Activated CD4-positive, alpha-beta T cell treated with anti-CD3 and anti-CD28 coated beads, Interleukin-2, amount 10 ng/mL, durations not matched to agents 24 days and 14 days (primary cell): ENCODE measurements at regions of chr1 and their contacts with region 1.

Region 1: DNA sequence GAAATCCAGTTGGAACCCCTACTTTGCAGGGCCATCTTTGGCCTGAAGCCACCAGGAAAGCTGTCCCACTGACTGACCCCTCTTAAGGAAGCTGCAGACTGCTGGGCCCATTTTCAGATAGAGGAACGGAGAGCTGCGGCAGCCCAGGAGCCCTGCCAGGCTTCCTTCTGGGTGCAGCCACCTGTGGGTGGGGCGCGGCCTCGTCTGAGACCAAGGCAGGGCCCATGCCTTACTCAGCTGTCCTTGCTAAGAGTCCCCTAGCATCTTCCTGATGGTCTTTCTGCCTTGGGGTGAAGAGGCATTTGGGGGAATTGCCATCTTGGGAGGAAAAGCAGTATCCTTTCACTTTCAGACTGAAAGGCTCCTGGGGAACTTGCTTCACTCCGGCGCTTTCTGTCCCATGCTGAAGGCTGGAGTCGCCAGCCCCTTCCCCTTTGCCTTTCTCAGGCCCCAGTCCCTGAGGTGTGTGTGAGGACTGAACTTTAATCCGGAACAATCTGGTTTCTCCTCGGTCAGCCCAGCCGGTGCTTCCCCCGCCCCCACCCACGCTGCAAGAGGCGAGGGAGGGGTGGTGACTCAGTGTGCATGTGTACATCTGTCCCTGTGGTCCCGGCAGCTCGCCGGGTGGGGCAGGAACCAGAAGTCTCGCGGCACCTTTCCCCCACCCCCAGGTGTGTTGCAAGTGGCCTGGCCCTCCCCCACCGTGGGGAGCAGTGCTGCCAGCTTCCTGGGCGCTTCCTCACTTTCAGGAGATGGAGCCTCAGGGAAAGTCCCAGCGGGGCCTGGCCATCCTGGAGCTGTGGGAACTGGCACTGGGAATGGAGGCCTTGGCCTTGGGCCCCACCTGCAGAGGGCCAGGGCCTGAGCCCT is 5.1 kb downstream of the ZC3H12A start:
- DNase-seq: peak; percentile 94
- H3K4me3 Mint-ChIP-seq: peak overlapping the region; percentile 97
- H3K27ac Mint-ChIP-seq: peak overlapping the region; percentile 98
- H3K4me1 Mint-ChIP-seq: peaks cover 32% of the 10 kb centered on the region
- H3K27me3 Mint-ChIP-seq: no peaks in the 10 kb centered on the region

Region 2: GRCh38 chr1:36155408-36156328 is 1323.8 kb before region 1 on chr1 and contains the start of gene MAP7D1:
- intact Hi-C with region 1: loop called (anchors 5 kb)
- DNase-seq: peak; percentile 94
- H3K4me3 Mint-ChIP-seq: peak within 1 kb of the TSS; percentile 96
- H3K27ac Mint-ChIP-seq: peak within 1 kb of the TSS; percentile 96
- H3K4me1 Mint-ChIP-seq: peaks cover 65% of the 10 kb centered on the region
- H3K27me3 Mint-ChIP-seq: no peaks in the 10 kb centered on the region
- total RNA-seq, gene MAP7D1: 170 and 177 TPM in 2 replicates

Region 3: DNA sequence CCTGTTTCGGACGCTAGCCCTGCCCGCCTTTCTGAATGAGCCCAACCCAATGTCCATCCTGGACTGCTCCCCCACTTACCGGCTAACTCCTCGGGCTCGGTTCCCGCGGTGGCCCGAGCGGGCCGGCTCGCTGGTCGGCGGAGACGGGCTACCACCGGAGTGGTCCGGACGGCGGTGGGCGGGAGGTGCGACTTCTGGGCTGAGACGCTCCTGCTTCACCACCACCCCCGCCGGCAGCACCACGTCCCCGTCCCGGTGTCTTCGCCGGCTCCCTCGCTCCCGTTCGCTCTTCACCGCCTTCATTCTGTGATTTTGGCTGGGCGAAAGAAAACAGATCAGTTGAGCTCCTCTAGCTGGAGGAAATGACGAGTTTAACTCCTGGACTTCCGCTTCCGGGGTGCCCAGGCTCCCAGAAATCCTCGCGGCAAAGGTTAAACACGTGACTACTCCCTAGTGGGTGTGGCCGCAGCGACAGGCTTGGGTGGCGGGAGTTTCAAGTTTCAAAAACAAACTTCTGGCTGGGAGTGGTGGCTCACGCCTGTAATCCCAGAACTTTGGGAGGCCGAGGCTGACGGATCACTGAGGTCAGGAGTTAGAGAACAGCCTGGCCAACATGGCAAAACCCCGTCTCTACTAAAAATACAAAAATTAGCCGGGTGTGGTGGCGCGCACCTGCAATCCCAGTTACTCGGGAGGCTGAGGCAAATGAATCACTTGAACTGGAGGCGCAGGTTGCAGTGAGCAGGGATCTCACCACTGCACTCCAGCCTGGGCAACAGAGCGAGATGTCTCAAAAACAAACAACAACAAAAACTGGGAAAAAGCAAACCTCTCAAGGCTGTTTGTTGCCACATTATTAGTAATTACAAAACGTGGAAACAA is 74.7 kb after region 1 on chr1 and contains the start of gene SNIP1:
- intact Hi-C with region 1: loop called (anchors 2 kb)
- DNase-seq: peak; percentile 97
- H3K4me3 Mint-ChIP-seq: peak within 1 kb of the TSS; percentile 98
- H3K27ac Mint-ChIP-seq: peak within 1 kb of the TSS; percentile 97
- H3K4me1 Mint-ChIP-seq: peaks cover 46% of the 10 kb centered on the region
- H3K27me3 Mint-ChIP-seq: no peaks in the 10 kb centered on the region
- total RNA-seq, gene SNIP1: 22.7 and 25.4 TPM in 2 replicates

Region 4: DNA sequence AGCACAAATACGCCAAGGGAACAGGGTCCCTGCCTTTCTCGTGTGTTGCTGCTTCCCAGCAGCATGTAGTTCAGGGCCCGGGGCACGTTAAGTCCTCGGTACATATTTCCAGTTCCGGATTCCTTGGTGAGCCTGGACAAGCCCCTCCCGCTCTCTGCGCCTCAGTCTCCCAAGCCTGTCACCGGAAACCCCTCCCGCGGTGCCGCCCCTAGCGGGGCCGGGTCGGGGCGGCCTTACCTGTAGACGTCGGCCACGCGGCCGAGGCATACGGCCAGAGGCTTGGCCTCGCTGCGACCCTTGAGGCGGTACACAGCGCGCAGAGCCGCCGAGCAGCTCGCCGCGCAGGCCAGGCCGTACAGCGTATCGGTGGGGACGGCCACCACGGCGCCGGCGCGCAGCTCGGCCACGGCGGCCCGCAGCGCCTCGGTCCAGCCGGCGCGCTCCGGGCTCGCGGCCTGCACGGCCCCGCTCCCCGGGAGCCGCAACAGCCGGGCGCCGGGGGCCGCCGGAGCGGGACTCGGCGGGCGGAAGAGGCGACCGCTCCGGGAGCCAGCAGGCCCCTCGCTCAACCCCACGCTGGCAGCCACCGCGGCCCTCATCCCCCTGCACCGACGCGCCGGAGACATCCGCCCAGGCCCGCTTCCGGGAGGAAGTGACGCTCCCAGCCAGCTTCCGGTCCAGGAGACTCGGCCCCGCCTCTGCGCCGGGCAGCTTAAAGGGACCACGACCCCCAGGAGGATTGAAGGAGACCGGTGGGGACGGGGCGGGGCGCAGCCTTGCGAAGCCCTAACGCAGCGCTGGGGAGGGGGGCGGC is 328.3 kb after region 1 on chr1 and contains the starts of genes C1orf122 and YRDC:
- intact Hi-C with region 1: loop called (anchors 5 kb)
- DNase-seq: peak; percentile 98
- H3K4me3 Mint-ChIP-seq: peak within 1 kb of the TSS; percentile 98
- H3K27ac Mint-ChIP-seq: peak within 1 kb of the TSS; percentile 98
- H3K4me1 Mint-ChIP-seq: peaks cover 31% of the 10 kb centered on the region
- H3K27me3 Mint-ChIP-seq: no peaks in the 10 kb centered on the region
- total RNA-seq, gene C1orf122: 26.4 and 26.7 TPM in 2 replicates
- total RNA-seq, gene YRDC: 69.9 and 76.1 TPM in 2 replicates

Region 5: GRCh38 chr1:38012363-38013226 is 533.1 kb after region 1 on chr1 and contains the start of gene UTP11:
- intact Hi-C with region 1: loop called (anchors 5 kb)
- DNase-seq: peak; percentile 97
- H3K4me3 Mint-ChIP-seq: peak within 1 kb of the TSS; percentile 92
- H3K27ac Mint-ChIP-seq: peak within 1 kb of the TSS; percentile 95
- H3K4me1 Mint-ChIP-seq: peaks cover 46% of the 10 kb centered on the region
- H3K27me3 Mint-ChIP-seq: no peaks in the 10 kb centered on the region
- total RNA-seq, gene UTP11: 99.5 and 111 TPM in 2 replicates